GM10248 (cell line): ENCODE measurements at regions of chr4 and their contacts with region 1.

Region 1: DNA sequence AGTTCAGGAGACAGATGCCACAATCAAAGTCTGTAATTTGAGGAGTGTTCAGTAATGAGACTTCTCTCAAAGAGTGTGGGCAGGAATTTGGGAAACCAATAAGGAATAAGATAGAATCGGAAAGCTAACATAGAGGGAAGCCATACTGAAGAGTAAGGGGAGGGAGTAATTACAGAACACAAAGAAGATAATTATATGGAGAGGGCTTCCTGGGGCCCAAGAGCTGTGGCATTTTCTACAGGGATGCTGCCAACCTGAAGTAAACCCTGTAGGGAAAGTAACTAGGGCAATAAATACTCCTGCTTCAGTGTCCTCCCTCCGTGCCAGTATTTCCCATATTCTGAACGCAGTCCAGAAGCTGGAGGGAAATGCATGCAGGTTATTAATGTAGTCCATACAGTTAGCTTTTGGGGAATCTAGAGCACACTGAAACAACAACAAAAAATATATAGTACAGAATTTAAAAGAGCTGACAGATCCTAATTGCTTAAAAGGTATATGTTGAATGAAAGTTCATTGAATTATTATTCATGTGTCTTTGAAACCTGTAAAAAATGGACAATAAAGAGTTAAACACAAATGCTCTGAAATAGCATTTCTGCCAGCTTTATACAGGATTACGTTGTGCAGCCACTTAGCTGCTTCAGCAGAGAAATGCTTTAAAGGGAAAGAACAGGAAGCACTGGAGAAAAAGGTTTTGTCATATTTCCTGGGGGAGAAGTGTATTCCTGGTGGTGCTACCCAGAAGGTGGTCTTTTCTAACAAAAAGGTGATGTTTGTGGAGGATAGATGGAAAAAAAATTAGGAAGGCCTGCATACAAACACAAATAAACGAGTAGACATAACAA is 48.0 kb downstream of the CXXC4 start:
- DNase-seq: no peak
- CTCF ChIP-seq: no peak

Region 2: GRCh38 chr4:104429150-104429741 is 17.4 kb before region 1 on chr4:
- CTCF ChIA-PET with region 1: interaction called, 10 read pairs
- POLR2A ChIA-PET with region 1: no interaction called
- DNase-seq: no peak
- CTCF ChIP-seq: no peak